ENCODE measurements at regions of chr7 and their contacts with region 1.

Region 1: GRCh38 chr7:148563583-148564274 is 26.8 kb upstream of the C7orf33 start:
- DNase-seq: peak; percentile 53
- H3K4me3 Mint-ChIP-seq: peak overlapping the region; percentile 20
- H3K27ac Mint-ChIP-seq: peak overlapping the region; percentile 89
- H3K4me1 Mint-ChIP-seq: peaks cover 27% of the 10 kb centered on the region
- H3K27me3 Mint-ChIP-seq: peaks cover 2% of the 10 kb centered on the region

Region 2: DNA sequence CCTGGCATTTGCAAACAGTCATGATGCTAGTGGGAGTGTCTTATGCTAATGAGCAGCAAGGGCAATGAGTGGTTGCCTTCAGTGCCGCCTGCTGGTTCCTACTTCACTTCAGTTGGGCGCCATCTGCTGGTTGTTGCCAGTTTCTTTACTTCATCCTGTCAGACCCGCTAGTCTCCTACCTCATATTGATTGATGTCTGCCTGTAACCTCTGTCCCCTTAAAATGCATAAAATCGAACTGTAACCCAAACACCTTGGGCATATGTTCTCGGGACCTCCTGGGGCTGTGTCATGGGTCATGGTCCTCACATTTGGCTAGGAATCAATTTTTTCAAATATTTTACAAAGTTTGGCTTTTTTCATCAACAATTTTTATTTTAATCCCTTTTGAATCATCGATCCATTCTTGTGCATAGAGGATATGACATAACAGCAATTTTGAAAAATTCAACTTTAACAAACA is 36.0 kb before region 1 on chr7:
- CTCF ChIA-PET with region 1: interaction called, 3 read pairs
- intact Hi-C with region 1: loop called (anchors 1 kb)
- DNase-seq: peak; percentile 98
- H3K4me3 Mint-ChIP-seq: no peak overlapping the region
- H3K27ac Mint-ChIP-seq: no peak overlapping the region
- H3K4me1 Mint-ChIP-seq: peaks cover 4% of the 10 kb centered on the region
- H3K27me3 Mint-ChIP-seq: peaks cover 33% of the 10 kb centered on the region

Region 3: GRCh38 chr7:148575640-148576411 is 12.1 kb after region 1 on chr7:
- CTCF ChIA-PET with region 1: interaction called, 25 read pairs
- intact Hi-C with region 1: no loop called
- DNase-seq: peak; percentile 84
- H3K4me3 Mint-ChIP-seq: no peak overlapping the region
- H3K27ac Mint-ChIP-seq: no peak overlapping the region
- H3K4me1 Mint-ChIP-seq: peaks cover 11% of the 10 kb centered on the region
- H3K27me3 Mint-ChIP-seq: no peaks in the 10 kb centered on the region

Region 4: GRCh38 chr7:148633761-148634160 is 70.0 kb after region 1 on chr7:
- CTCF ChIA-PET with region 1: no interaction called
- intact Hi-C with region 1: loop called (anchors 2 kb)
- DNase-seq: peak; percentile 44
- H3K4me3 Mint-ChIP-seq: no peak overlapping the region
- H3K27ac Mint-ChIP-seq: peak overlapping the region; percentile 75
- H3K4me1 Mint-ChIP-seq: peaks cover 26% of the 10 kb centered on the region
- H3K27me3 Mint-ChIP-seq: no peaks in the 10 kb centered on the region

Measured in activated naive CD4-positive, alpha-beta T cell treated with anti-CD3 and anti-CD28 coated beads for 36 hours (primary cell).